ENCODE measurements at regions of chr20 and their contacts with region 1.

Region 1: DNA sequence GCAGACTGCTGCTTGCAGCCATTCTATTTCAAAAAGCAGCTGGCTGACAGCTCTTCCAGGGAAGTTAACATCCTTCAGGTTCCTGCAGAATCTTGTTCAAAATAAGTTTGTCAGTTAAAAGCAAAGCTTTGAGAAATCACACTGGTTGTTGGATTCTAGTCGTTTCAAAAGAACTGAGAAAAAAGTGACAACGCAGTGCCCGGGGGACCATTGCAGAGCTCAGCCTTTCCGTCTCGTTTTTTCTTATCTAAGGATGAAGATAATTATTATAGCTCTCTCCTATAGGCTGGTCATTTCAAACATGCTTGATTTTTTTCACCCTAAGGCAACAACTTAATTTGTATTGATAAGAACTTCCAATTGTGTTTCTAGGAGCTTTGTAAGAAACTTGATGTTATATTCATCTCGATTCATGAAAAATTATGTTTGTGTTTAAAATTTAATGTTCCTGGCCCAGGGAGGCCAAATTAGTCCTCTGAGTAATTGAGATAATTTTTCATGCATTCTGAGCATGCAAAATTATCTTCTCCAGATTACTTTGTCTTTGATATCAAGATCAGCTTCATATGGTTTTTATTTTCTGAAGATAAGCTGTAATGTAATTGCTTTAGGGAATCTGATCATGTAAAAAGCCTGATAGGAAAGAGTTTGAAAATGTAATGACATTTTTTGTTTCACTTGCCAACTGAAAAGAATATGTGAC is 58.4 kb downstream of the SNAP25 start:
- DNase-seq: no peak
- H3K4me3 ChIP-seq: no peak overlapping the region
- H3K27ac ChIP-seq: no peak overlapping the region
- H3K4me1 ChIP-seq: peaks cover 11% of the 10 kb centered on the region
- H3K27me3 ChIP-seq: no peaks in the 10 kb centered on the region
- CTCF ChIP-seq: no peak

Region 2: DNA sequence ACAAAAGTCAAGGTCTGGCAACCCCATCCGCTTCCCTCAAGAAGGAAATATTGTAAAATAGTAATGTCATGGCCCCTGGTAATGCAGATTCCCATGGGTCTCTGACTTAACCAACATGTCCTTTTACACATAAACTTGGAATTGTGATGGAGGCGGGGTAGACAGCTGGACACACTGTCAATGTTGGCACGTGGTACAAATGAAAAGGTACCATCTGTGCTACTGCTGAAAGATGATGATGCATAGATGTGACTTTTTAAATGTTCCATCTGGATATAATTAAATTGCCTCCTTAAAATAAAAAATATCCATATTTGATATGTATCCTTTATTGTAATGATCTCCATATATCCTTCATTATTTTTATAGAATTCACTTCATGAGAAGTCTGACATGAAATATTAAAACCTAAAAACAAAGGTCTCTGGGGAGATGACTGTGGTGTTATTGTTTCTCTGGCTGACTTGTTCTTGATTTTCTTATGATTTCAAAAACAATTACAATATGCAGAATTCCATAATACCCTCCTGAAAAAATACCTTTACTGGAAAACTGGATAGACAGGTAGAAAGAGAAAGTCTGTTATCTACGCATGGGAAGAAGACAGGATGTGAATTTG is 52.5 kb after region 1 on chr20:
- CTCF ChIA-PET with region 1: no interaction called
- dilution Hi-C with region 1: loop called (anchors 5 kb)
- in situ Hi-C with region 1: no loop called
- intact Hi-C with region 1: no loop called
- DNase-seq: no peak
- H3K4me3 ChIP-seq: no peak overlapping the region
- H3K27ac ChIP-seq: no peak overlapping the region
- H3K4me1 ChIP-seq: no peaks in the 10 kb centered on the region
- H3K27me3 ChIP-seq: no peaks in the 10 kb centered on the region
- CTCF ChIP-seq: no peak

Region 3: GRCh38 chr20:11117808-11118528 is 840.9 kb after region 1 on chr20:
- CTCF ChIA-PET with region 1: no interaction called
- dilution Hi-C with region 1: no loop called
- in situ Hi-C with region 1: no loop called
- intact Hi-C with region 1: no loop called
- DNase-seq: peak; percentile 99
- H3K4me3 ChIP-seq: no peak overlapping the region
- H3K27ac ChIP-seq: peak overlapping the region; percentile 99
- H3K4me1 ChIP-seq: peaks cover 33% of the 10 kb centered on the region
- H3K27me3 ChIP-seq: no peaks in the 10 kb centered on the region
- CTCF ChIP-seq: peak in 1 of 2 donors; percentile 0

Measured in mammary epithelial cell (primary cell).